CD4-positive, alpha-beta memory T cell (primary cell): ENCODE measurements at regions of chr2 and their contacts with region 1.

Region 1: DNA sequence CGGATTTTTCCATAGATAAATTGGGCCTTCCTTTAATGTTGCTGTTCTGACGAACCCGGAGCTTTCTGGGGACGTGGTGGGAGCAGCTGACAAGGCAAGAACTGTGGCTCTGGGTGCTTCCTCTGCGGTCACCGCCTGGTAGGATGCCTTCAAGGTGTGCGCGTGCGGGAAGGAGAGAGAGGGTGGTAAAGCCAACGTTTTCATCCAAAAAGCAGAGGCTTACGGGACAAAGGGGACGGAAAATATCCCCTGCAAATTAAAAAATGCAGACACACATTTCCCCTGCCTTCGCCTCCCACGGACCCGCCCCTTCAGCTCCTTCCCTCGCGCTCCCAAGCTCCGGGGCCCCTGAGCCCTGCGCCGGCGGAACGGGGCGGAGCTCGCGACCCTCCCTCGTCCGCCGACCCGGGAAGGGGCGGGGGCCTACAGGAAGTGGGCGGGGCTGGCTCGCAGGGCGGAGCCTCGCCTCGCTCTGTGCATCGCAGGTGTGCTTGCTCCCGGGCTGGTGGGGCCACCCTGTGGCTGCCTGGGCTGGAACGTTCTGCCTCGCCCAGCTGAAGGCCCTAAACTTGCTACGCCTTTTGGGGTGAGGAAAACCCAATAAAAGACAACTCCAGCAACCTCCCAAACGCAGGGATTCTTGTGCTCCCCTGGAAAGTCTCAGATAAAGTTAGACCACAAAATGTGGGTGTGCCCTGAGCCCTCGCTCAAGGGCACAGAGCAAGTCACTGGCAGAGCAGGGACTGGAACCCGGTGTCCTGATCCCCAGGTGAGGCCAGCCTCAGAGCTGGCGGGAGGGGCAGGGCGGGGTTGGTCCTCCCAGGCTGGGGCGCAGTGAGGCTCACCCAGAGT is 25.4 kb upstream of the SLC66A3 start:
- DNase-seq: peak; percentile 81 to 85 (median 85)
- H3K4me3 ChIP-seq: peak overlapping the region; percentile 19 to 57
- H3K4me3 Mint-ChIP-seq: peak overlapping the region; percentile 77 to 93 (median 82)
- H3K27ac ChIP-seq: peak overlapping the region; percentile 54
- H3K27ac Mint-ChIP-seq: peak overlapping the region; percentile 77 to 92 (median 84)
- H3K4me1 ChIP-seq: peaks cover 48% of the 10 kb centered on the region
- H3K4me1 Mint-ChIP-seq: peaks cover 14 to 53% (median 37%) of the 10 kb centered on the region in 4 donors
- H3K27me3 ChIP-seq: no peaks in the 10 kb centered on the region
- H3K27me3 Mint-ChIP-seq: no peaks in the 10 kb centered on the region

Region 2: DNA sequence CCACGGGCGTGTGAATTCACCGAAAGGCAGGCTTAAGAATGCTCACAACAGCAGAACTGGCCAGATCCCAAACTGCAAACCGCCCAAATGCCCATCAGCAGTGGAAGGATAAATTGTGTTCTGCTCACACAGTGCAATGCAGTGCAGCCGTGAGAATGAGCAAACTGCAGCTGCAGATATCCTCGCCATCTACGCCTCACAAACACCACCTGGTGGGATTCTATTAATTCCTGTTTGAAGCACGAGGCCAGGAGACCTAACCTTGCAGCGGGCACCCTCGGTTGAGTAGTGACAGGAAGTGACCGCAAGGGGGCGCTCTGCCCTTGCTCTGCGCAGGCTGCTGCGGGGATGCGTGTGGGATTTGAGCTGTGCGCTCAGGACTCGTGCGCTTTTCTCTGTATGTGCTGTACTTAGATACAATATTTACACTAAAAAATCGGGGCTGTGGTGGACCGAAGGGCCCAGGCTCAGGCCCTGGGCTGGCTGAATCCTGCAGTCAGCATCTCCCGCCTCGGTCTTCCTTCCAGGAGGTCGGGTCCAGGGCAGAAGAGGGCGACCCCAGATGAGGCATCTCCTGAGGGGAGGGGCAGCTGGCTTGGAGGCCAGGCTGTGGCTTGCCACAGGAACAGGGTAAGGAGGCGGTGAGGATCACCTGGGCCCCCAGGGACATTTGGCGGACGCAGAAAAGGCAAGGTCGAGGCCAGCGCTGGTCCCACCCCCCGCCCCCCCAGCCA is 297.5 kb before region 1 on chr2:
- CTCF ChIA-PET with region 1: interaction called, 228 read pairs
- POLR2A ChIA-PET with region 1: interaction called, 16 read pairs
- intact Hi-C with region 1: loop called (anchors 1 kb)
- DNase-seq: peak; percentile 75 to 79 (median 77)
- H3K4me3 ChIP-seq: no peak overlapping the region
- H3K4me3 Mint-ChIP-seq: peak overlapping the region in 7 of 8 donors; percentile 14 to 54 (median 33)
- H3K27ac ChIP-seq: no peak overlapping the region
- H3K27ac Mint-ChIP-seq: peak overlapping the region in 2 of 7 donors; percentile 23 to 63
- H3K4me1 ChIP-seq: peaks cover 14% of the 10 kb centered on the region
- H3K4me1 Mint-ChIP-seq: peaks cover 4 to 17% (median 9%) of the 10 kb centered on the region in 4 donors
- H3K27me3 ChIP-seq: peaks cover 4% of the 10 kb centered on the region
- H3K27me3 Mint-ChIP-seq: peaks cover 11 to 18% of the 10 kb centered on the region in 2 donors

Region 3: DNA sequence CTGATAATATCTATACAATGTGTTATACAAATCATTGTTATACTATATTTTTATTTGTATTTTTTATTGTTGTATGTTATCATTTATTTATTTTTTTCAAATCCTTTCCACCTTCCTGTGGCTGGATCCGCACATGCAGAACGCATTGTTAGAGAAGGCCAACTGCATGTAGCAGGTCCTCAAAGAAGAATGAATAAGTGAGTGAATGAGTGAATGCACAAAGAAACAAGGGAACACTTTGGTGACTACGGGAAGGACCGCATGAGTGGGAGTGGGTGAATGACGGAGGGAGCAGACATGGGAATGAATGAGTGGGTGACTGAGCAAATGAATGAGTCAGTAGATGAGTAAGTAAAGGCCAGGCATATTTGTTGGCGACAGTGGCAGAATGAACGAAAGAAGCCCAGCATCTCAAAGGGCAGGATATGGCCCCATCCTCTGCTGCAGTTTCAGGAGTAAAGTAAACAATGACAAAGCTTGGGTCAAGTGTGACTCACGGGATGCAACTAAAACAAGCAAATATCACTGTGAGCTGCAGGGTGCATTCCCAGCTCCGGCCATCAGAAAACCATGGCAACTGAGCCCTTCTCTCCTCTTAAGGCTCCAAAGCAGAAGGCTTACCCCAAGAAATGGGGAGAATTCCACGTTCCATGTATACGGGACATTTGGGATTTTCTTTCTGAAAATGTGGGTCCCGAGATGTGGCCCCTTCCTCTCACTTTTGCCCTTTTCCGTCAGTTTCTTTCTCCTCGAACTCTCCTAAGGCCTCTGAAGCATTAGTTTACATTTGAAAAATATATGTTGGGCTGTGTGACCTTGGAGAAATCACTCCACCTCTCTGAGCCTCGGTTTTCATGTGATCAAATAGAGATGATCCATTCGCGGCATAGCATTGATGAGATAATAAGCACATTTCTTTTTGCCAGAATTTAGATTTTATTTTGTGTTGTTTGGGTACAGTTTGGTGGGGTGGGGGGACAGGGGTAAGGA is 193.6 kb before region 1 on chr2:
- CTCF ChIA-PET with region 1: no interaction called
- POLR2A ChIA-PET with region 1: no interaction called
- intact Hi-C with region 1: no loop called
- DNase-seq: no peak
- H3K4me3 ChIP-seq: no peak overlapping the region
- H3K4me3 Mint-ChIP-seq: peak overlapping the region in 1 of 8 donors; percentile 2
- H3K27ac ChIP-seq: no peak overlapping the region
- H3K27ac Mint-ChIP-seq: no peak overlapping the region
- H3K4me1 ChIP-seq: no peaks in the 10 kb centered on the region
- H3K4me1 Mint-ChIP-seq: peaks cover 0 to 2% (median 0%) of the 10 kb centered on the region in 4 donors
- H3K27me3 ChIP-seq: no peaks in the 10 kb centered on the region
- H3K27me3 Mint-ChIP-seq: peaks cover 8 to 10% of the 10 kb centered on the region in 2 donors

Region 4: GRCh38 chr2:11080253-11081115 is 49.3 kb before region 1 on chr2:
- CTCF ChIA-PET with region 1: no interaction called
- POLR2A ChIA-PET with region 1: no interaction called
- intact Hi-C with region 1: no loop called
- DNase-seq: no peak
- H3K4me3 ChIP-seq: no peak overlapping the region
- H3K4me3 Mint-ChIP-seq: no peak overlapping the region
- H3K27ac ChIP-seq: no peak overlapping the region
- H3K27ac Mint-ChIP-seq: peak overlapping the region in 2 of 7 donors; percentile 47 to 83
- H3K4me1 ChIP-seq: no peaks in the 10 kb centered on the region
- H3K4me1 Mint-ChIP-seq: no peaks in the 10 kb centered on the region
- H3K27me3 ChIP-seq: no peaks in the 10 kb centered on the region
- H3K27me3 Mint-ChIP-seq: peaks cover 4 to 6% of the 10 kb centered on the region in 2 donors

Region 5: DNA sequence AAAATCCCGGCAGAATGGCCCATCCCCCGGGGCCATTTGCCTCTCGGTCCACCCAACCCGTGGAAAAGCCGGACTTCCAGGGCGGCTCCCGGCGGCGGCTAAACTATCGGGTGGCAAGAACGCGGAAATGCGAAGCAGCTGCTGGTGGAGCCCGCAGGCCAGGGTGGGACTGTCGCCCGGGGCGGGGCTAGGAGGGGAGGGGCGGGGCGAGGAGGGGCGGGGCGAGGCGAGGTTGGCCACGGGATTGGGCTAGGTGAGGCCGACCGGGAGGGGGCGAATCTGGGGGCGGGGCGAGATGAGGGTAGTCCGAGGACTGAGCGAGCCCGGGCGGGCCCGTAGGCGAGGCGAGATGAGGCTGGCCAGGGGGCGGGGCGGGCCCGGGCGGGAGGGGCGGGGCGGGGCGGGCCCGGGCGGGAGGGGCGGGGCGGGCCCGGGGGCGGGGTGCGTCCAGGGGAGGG is 25.1 kb after region 1 on chr2:
- CTCF ChIA-PET with region 1: interaction called, 53 read pairs
- POLR2A ChIA-PET with region 1: interaction called, 55 read pairs
- intact Hi-C with region 1: loop called (anchors 1 kb)
- DNase-seq: peak; percentile 95 to 98 (median 97)
- H3K4me3 ChIP-seq: peak overlapping the region; percentile 38 to 66
- H3K4me3 Mint-ChIP-seq: peak overlapping the region; percentile 81 to 88 (median 85)
- H3K27ac ChIP-seq: peak overlapping the region; percentile 68
- H3K27ac Mint-ChIP-seq: peak overlapping the region; percentile 85 to 93 (median 88)
- H3K4me1 ChIP-seq: peaks cover 23% of the 10 kb centered on the region
- H3K4me1 Mint-ChIP-seq: peaks cover 4 to 28% (median 21%) of the 10 kb centered on the region in 4 donors
- H3K27me3 ChIP-seq: no peaks in the 10 kb centered on the region
- H3K27me3 Mint-ChIP-seq: no peaks in the 10 kb centered on the region

Region 6: GRCh38 chr2:11175293-11175795 is 45.5 kb after region 1 on chr2:
- CTCF ChIA-PET with region 1: no interaction called
- POLR2A ChIA-PET with region 1: no interaction called
- intact Hi-C with region 1: no loop called
- DNase-seq: no peak
- H3K4me3 ChIP-seq: no peak overlapping the region
- H3K4me3 Mint-ChIP-seq: peak overlapping the region in 4 of 8 donors; percentile 0 to 62 (median 5)
- H3K27ac ChIP-seq: no peak overlapping the region
- H3K27ac Mint-ChIP-seq: peak overlapping the region; percentile 9 to 86 (median 81)
- H3K4me1 ChIP-seq: peaks cover 12% of the 10 kb centered on the region
- H3K4me1 Mint-ChIP-seq: peaks cover 11 to 13% (median 12%) of the 10 kb centered on the region in 4 donors
- H3K27me3 ChIP-seq: no peaks in the 10 kb centered on the region
- H3K27me3 Mint-ChIP-seq: no peaks in the 10 kb centered on the region

Region 7: GRCh38 chr2:11203480-11203879 is 73.7 kb after region 1 on chr2:
- CTCF ChIA-PET with region 1: interaction called, 16 read pairs
- POLR2A ChIA-PET with region 1: no interaction called
- intact Hi-C with region 1: loop called (anchors 10 kb)
- DNase-seq: no peak
- H3K4me3 ChIP-seq: no peak overlapping the region
- H3K4me3 Mint-ChIP-seq: no peak overlapping the region
- H3K27ac ChIP-seq: no peak overlapping the region
- H3K27ac Mint-ChIP-seq: peak overlapping the region in 3 of 7 donors; percentile 1 to 72 (median 64)
- H3K4me1 ChIP-seq: peaks cover 11% of the 10 kb centered on the region
- H3K4me1 Mint-ChIP-seq: peaks cover 8 to 15% (median 9%) of the 10 kb centered on the region in 4 donors
- H3K27me3 ChIP-seq: no peaks in the 10 kb centered on the region
- H3K27me3 Mint-ChIP-seq: no peaks in the 10 kb centered on the region

Region 8: GRCh38 chr2:11344342-11344955 is 214.6 kb after region 1 on chr2 and contains the start of gene ROCK2:
- CTCF ChIA-PET with region 1: interaction called, 10 read pairs
- POLR2A ChIA-PET with region 1: interaction called, 8 read pairs
- intact Hi-C with region 1: no loop called
- DNase-seq: peak; percentile 53 to 66 (median 62)
- H3K4me3 ChIP-seq: peak within 1 kb of the TSS; percentile 81 to 94
- H3K4me3 Mint-ChIP-seq: peak within 1 kb of the TSS; percentile 94 to 100 (median 98)
- H3K27ac ChIP-seq: peak within 1 kb of the TSS; percentile 53
- H3K27ac Mint-ChIP-seq: peak within 1 kb of the TSS; percentile 83 to 97 (median 95)
- H3K4me1 ChIP-seq: peaks cover 40% of the 10 kb centered on the region
- H3K4me1 Mint-ChIP-seq: peaks cover 25 to 45% (median 27%) of the 10 kb centered on the region in 4 donors
- H3K27me3 ChIP-seq: no peaks in the 10 kb centered on the region
- H3K27me3 Mint-ChIP-seq: no peaks in the 10 kb centered on the region
- total RNA-seq, gene ROCK2: 24.3 to 26.7 TPM

Region 9: DNA sequence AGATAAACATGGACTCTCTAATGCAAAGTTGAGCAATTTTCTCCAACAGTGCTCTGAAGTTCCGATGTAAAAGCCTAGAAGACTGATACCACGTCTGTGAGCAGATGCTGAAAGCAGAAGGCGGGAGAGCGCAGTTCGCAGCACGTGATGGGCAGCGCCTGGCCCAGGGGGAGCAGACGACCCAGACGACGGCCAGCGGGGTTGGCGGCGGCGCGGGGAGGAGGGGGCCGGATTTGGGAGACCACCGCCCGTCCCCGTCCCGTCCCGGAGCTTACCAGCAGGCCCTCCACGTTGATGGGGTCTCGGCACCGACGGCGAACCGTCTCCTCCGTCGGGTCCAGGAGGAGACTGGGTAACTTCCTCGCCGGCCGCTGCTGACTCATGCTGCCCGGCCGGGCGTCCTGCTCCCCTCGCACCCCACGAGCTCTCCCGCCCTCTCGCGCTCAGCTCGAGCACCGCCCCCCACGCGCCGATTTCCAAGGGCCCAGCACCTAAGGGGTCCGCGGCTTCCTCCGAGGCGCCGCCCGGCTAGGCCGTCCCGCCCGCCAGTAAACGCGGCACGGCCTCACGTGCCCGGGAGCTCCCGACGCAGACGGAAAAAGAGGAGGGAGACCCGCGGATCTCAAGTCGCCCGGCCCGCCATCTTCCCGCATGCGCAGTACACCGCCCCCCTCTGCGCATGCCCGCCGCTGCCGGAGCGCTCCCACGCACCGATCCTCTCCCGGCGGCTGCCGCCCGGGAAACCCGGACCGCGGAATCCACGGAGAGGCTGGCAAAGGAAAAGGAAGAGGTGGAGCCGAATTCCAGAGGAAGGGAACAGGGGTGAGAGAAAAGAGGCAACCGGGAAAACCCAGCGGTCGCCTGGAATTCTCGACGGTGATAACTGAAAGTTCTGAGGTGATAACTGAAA is 335.9 kb after region 1 on chr2 and contains the start of gene E2F6:
- CTCF ChIA-PET with region 1: interaction called, 21 read pairs
- POLR2A ChIA-PET with region 1: interaction called, 5 read pairs
- intact Hi-C with region 1: loop called (anchors 5 kb)
- DNase-seq: peak; percentile 81 to 88 (median 85)
- H3K4me3 ChIP-seq: peak within 1 kb of the TSS; percentile 61 to 65
- H3K4me3 Mint-ChIP-seq: peak within 1 kb of the TSS; percentile 92 to 98 (median 95)
- H3K27ac ChIP-seq: peak within 1 kb of the TSS; percentile 64
- H3K27ac Mint-ChIP-seq: peak within 1 kb of the TSS; percentile 73 to 97 (median 93)
- H3K4me1 ChIP-seq: peaks cover 28% of the 10 kb centered on the region
- H3K4me1 Mint-ChIP-seq: peaks cover 28 to 50% (median 36%) of the 10 kb centered on the region in 4 donors
- H3K27me3 ChIP-seq: no peaks in the 10 kb centered on the region
- H3K27me3 Mint-ChIP-seq: no peaks in the 10 kb centered on the region
- total RNA-seq, gene E2F6: 8.0 to 8.5 TPM

Region 10: GRCh38 chr2:11778923-11779757 is 649.3 kb after region 1 on chr2:
- CTCF ChIA-PET with region 1: interaction called, 11 read pairs
- POLR2A ChIA-PET with region 1: interaction called, 3 read pairs
- intact Hi-C with region 1: loop called (anchors 5 kb)
- DNase-seq: peak; percentile 79 to 84 (median 81)
- H3K4me3 ChIP-seq: peak overlapping the region in 1 of 2 donors; percentile 19
- H3K4me3 Mint-ChIP-seq: peak overlapping the region; percentile 59 to 84 (median 72)
- H3K27ac ChIP-seq: peak overlapping the region; percentile 52
- H3K27ac Mint-ChIP-seq: peak overlapping the region; percentile 64 to 90 (median 87)
- H3K4me1 ChIP-seq: peaks cover 34% of the 10 kb centered on the region
- H3K4me1 Mint-ChIP-seq: peaks cover 32 to 48% (median 39%) of the 10 kb centered on the region in 4 donors
- H3K27me3 ChIP-seq: no peaks in the 10 kb centered on the region
- H3K27me3 Mint-ChIP-seq: no peaks in the 10 kb centered on the region